ENCODE measurements at regions of chr12 and their contacts with region 1.

Region 1: DNA sequence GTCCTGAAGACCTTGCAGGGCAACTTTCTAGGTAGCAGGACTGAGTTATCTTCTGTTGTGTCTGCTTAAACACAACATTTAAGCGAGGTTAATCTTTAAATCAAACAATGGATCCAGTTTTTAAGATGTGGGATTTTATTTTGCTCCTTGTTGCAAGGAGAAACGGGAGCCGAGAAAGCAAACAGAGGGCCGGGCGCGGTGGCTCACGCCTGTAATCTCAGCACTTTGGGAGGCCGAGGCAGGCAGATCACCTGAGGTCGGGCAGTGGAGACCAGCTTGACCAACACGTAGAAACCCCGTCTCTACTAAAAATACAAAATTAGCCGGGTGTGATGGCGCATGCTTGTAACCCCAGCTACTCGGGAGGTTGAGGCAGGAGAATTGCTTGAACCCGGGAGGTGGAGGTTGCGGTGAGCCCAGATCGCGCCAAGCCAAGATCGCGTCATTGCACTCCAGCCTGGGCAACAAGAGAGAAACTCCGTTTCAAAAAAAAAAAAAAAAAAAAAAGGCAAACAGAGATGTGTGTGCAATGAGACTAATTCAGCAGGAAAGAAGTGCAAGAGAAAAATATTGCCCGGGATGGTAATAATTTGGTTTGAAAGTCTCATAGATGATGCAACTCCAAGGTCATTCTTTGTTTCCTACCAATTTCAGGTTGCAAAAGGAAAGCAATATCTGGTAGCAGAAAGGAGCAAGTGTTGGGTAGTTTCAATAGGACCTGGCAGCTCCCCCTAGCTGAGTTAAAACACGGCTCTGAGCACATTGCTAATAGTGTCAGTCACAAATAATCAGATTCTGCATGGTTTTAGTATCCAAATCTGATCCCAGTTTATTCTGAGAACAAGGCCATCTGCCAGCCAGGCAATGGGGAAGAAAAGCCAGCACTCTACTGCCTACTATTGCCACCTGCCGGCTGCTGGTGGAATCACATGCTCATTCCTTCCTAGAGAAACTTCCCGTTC is 141.4 kb downstream of the PPM1H start:
- DNase-seq: peak; percentile 88
- H3K4me3 Mint-ChIP-seq: no peak overlapping the region
- H3K27ac Mint-ChIP-seq: no peak overlapping the region
- H3K4me1 Mint-ChIP-seq: no peaks in the 10 kb centered on the region
- H3K27me3 Mint-ChIP-seq: no peaks in the 10 kb centered on the region
- CTCF ChIP-seq: peak; percentile 91

Region 2: GRCh38 chr12:62581288-62582064 is 212.1 kb before region 1 on chr12:
- CTCF ChIA-PET with region 1: interaction called, 241 read pairs
- POLR2A ChIA-PET with region 1: interaction called, 6 read pairs
- intact Hi-C with region 1: loop called (anchors 1 kb)
- DNase-seq: peak; percentile 53
- H3K4me3 Mint-ChIP-seq: no peak overlapping the region
- H3K27ac Mint-ChIP-seq: no peak overlapping the region
- H3K4me1 Mint-ChIP-seq: no peaks in the 10 kb centered on the region
- H3K27me3 Mint-ChIP-seq: no peaks in the 10 kb centered on the region
- CTCF ChIP-seq: peak; percentile 49

Region 3: GRCh38 chr12:62588916-62589315 is 204.6 kb before region 1 on chr12:
- CTCF ChIA-PET with region 1: interaction called, 241 read pairs
- POLR2A ChIA-PET with region 1: no interaction called
- intact Hi-C with region 1: no loop called
- DNase-seq: no peak
- H3K4me3 Mint-ChIP-seq: no peak overlapping the region
- H3K27ac Mint-ChIP-seq: no peak overlapping the region
- H3K4me1 Mint-ChIP-seq: no peaks in the 10 kb centered on the region
- H3K27me3 Mint-ChIP-seq: no peaks in the 10 kb centered on the region
- CTCF ChIP-seq: no peak

Region 4: GRCh38 chr12:62731055-62731820 is 62.3 kb before region 1 on chr12:
- CTCF ChIA-PET with region 1: no interaction called
- POLR2A ChIA-PET with region 1: no interaction called
- intact Hi-C with region 1: loop called (anchors 5 kb)
- DNase-seq: peak; percentile 22
- H3K4me3 Mint-ChIP-seq: no peak overlapping the region
- H3K27ac Mint-ChIP-seq: no peak overlapping the region
- H3K4me1 Mint-ChIP-seq: peaks cover 23% of the 10 kb centered on the region
- H3K27me3 Mint-ChIP-seq: no peaks in the 10 kb centered on the region
- CTCF ChIP-seq: no peak

Region 5: GRCh38 chr12:62779488-62779887 is 14.0 kb before region 1 on chr12:
- CTCF ChIA-PET with region 1: interaction called, 33 read pairs
- POLR2A ChIA-PET with region 1: interaction called, 3 read pairs
- intact Hi-C with region 1: no loop called
- DNase-seq: no peak
- H3K4me3 Mint-ChIP-seq: no peak overlapping the region
- H3K27ac Mint-ChIP-seq: no peak overlapping the region
- H3K4me1 Mint-ChIP-seq: no peaks in the 10 kb centered on the region
- H3K27me3 Mint-ChIP-seq: no peaks in the 10 kb centered on the region
- CTCF ChIP-seq: no peak